Activated CD4-positive, alpha-beta T cell treated with anti-CD3 and anti-CD28 coated beads, Interleukin-2, amount 10 ng/mL, durations not matched to agents 24 days and 14 days (primary cell): ENCODE measurements at regions of chr10 and their contacts with region 1.

Region 1: GRCh38 chr10:3852147-3852904 is 67.3 kb upstream of the KLF6 start:
- DNase-seq: peak; percentile 89
- H3K4me3 Mint-ChIP-seq: peak overlapping the region; percentile 70
- H3K27ac Mint-ChIP-seq: peak overlapping the region; percentile 87
- H3K4me1 Mint-ChIP-seq: peaks cover 38% of the 10 kb centered on the region
- H3K27me3 Mint-ChIP-seq: no peaks in the 10 kb centered on the region

Region 2: DNA sequence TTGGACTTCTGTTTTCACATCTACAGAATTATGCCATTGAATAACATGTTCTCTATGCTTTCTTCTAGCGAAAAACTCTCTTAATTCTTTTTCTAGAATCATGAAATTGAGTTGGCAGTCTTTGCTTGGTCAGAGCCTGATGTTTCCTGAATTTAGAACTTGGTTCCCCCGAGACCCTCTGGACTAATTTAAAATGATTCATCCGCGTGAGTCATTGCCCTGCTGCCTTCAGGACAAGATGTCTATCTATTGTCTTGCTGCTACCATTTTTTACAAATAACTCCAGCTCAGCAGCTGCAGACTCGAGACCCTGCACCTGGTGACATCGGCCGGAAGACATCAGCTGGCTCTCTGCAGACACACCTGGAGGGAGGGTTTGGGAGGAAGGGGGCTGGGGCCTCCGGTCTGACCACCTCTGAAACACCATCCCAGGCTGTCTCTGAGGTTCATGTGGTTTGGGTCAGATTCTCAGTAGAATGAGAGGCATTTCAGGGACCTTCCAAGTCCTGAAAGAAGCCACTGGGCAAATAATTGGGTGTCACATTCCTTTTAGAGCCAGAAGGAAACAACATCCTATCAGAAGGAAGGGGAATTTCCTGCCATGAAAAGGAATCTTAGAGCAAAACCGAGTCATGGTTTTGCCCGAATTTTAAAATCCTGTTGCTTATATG is 46.4 kb before region 1 on chr10:
- intact Hi-C with region 1: loop called (anchors 1 kb)
- DNase-seq: peak; percentile 87
- H3K4me3 Mint-ChIP-seq: peak overlapping the region; percentile 48
- H3K27ac Mint-ChIP-seq: no peak overlapping the region
- H3K4me1 Mint-ChIP-seq: peaks cover 64% of the 10 kb centered on the region
- H3K27me3 Mint-ChIP-seq: no peaks in the 10 kb centered on the region

Region 3: GRCh38 chr10:3828404-3829155 is 23.7 kb before region 1 on chr10:
- intact Hi-C with region 1: loop called (anchors 1 kb)
- DNase-seq: peak; percentile 78
- H3K4me3 Mint-ChIP-seq: peak overlapping the region; percentile 68
- H3K27ac Mint-ChIP-seq: peak overlapping the region; percentile 92
- H3K4me1 Mint-ChIP-seq: peaks cover 52% of the 10 kb centered on the region
- H3K27me3 Mint-ChIP-seq: no peaks in the 10 kb centered on the region

Region 4: DNA sequence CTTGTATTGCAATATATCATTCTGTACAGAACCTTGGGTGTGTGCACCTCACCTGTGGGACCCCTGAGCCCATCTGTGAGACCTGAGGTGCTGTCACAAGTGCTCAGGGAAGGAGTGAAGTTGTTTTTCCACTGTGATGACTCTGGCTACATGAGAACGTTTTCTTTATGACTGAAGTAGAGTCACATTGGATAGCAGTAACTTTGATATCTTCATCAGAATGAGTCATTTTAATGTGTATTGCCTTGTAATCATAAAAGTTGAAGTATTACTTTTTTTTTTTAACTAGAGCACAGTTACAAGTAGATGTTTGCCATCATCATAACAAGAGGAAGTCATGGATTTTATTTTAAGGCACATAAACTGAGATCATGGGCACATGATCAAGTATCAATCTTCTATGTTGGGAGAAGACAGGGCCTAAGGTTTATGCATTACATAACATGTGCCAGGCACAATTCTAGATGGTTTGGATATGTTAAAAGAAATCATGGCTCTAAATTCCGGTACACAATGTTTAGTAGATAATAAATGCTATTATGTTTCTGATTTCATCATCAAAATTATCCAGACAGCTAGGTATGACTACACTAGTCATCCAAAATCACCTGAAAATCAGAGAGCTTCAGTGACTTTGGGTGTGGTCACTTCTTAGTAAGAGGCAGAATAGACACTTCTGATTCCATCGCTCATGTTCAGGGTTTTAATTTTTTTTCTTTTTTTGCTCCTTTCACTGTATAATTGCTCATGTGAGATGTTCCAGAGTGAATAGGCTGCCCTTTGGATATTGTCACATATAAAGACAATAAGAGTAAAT is 15.3 kb after region 1 on chr10:
- intact Hi-C with region 1: loop called (anchors 1 kb)
- DNase-seq: no peak
- H3K4me3 Mint-ChIP-seq: no peak overlapping the region
- H3K27ac Mint-ChIP-seq: peak overlapping the region; percentile 91
- H3K4me1 Mint-ChIP-seq: peaks cover 61% of the 10 kb centered on the region
- H3K27me3 Mint-ChIP-seq: no peaks in the 10 kb centered on the region

Region 5: GRCh38 chr10:3887885-3888476 is 35.7 kb after region 1 on chr10:
- intact Hi-C with region 1: no loop called
- DNase-seq: peak; percentile 83
- H3K4me3 Mint-ChIP-seq: peak overlapping the region; percentile 67
- H3K27ac Mint-ChIP-seq: peak overlapping the region; percentile 94
- H3K4me1 Mint-ChIP-seq: peaks cover 38% of the 10 kb centered on the region
- H3K27me3 Mint-ChIP-seq: no peaks in the 10 kb centered on the region